ENCODE measurements at regions of chr9 and their contacts with region 1.

Region 1: DNA sequence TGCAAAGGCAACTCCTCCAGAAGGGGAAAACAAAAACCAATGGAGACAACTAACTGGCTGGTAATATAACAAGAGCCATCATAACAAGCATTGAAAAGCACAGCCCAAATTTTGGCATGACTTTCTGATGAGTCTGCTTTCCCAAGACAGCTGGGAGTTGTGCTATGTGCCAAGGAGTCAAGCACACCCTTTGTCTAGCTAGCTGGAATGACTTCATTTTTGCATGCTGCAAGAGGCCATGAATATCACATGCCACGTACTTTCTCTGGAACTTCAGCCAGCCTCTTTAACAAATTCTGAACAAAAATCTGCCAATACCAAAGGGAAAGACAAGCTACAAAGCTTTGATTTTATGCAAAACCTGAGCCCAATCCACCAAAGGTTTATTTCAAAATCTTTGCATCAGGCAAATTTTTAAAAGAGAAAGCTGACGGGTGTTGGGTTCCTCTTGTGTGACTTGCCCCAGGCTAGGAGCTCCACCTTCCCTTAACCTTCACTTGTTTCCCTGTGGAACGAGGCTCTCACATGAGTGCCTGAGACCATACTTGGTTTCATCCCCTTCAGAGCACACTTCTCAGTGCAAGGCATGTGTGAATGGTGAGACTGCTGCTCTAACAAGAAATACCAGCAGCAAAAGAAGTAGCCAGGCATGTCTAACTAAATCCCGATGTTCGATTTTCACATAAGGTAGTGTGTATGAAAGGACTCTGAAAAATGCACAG is 47.3 kb downstream of the S1PR3 start:
- DNase-seq: peak; percentile 97
- ATAC-seq: peak; percentile 91
- H3K4me3 ChIP-seq: no peak overlapping the region
- H3K27ac ChIP-seq: peak overlapping the region; percentile 70; the same call in 1 of the 2 replicates
- H3K4me1 ChIP-seq: peaks cover 14% of the 10 kb centered on the region
- H3K27me3 ChIP-seq: no peaks in the 10 kb centered on the region
- CTCF ChIP-seq: no peak
- POLR2A ChIP-seq: no peak
- RAD21 ChIP-seq: no peak

Region 2: GRCh38 chr9:88965473-88965872 is 73.1 kb before region 1 on chr9:
- CTCF ChIA-PET with region 1: no interaction called
- POLR2A ChIA-PET with region 1: no interaction called
- dilution Hi-C with region 1: no loop called
- in situ Hi-C with region 1: no loop called
- intact Hi-C with region 1: no loop called
- DNase-seq: no peak
- ATAC-seq: no peak
- H3K4me3 ChIP-seq: no peak overlapping the region
- H3K27ac ChIP-seq: no peak overlapping the region
- H3K4me1 ChIP-seq: no peaks in the 10 kb centered on the region
- H3K27me3 ChIP-seq: peaks cover 28% of the 10 kb centered on the region
- CTCF ChIP-seq: no peak
- POLR2A ChIP-seq: no peak
- RAD21 ChIP-seq: no peak

Region 3: DNA sequence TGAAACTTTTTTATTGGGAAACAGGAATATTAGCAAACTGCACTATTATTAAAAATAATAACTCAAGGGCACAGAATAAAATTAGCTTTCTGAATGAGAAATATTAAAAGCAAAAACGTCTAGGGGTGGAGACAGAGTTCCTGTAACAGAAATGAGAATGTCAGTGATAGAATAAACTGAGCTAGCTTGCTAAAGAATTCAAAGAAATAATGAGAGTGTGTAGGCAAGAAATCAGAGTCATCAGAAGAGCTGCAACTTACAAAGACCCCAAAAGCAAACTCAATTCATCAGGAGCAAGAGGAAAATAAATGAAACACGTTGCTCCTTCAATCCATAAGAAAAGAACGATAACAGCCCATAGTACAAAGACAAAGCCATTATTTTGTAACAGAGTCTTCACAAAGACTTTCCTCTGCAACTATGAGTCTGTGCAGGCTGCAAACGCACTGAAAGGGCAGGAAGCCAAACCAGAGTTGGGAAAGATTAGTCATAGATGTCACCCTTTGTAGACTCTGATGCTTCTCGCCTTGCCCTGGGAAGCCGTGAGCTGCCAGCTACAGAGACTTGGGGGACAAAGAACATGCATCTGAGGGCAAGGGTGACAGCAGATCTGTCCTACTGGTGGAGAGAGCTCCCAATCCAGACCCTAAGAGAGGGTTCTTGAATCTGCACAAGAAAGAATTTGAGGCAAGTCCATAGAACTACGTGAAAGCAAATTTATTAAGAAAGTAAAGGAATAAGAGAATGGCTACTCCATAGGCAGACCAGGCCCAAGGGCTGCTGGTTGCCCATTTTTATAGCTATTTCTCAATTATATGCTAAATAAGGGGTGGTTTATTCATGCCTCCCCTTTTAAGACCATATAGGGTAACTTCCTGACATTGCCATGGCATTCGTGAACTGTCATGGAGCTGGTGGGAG is 99.3 kb after region 1 on chr9:
- CTCF ChIA-PET with region 1: no interaction called
- POLR2A ChIA-PET with region 1: no interaction called
- dilution Hi-C with region 1: no loop called
- in situ Hi-C with region 1: no loop called
- intact Hi-C with region 1: loop called (anchors 10 kb)
- DNase-seq: peak; percentile 95
- ATAC-seq: peak; percentile 84
- H3K4me3 ChIP-seq: no peak overlapping the region
- H3K27ac ChIP-seq: peak overlapping the region; percentile 75
- H3K4me1 ChIP-seq: peaks cover 26% of the 10 kb centered on the region
- H3K27me3 ChIP-seq: no peaks in the 10 kb centered on the region
- CTCF ChIP-seq: no peak
- POLR2A ChIP-seq: no peak
- RAD21 ChIP-seq: no peak

Region 4: DNA sequence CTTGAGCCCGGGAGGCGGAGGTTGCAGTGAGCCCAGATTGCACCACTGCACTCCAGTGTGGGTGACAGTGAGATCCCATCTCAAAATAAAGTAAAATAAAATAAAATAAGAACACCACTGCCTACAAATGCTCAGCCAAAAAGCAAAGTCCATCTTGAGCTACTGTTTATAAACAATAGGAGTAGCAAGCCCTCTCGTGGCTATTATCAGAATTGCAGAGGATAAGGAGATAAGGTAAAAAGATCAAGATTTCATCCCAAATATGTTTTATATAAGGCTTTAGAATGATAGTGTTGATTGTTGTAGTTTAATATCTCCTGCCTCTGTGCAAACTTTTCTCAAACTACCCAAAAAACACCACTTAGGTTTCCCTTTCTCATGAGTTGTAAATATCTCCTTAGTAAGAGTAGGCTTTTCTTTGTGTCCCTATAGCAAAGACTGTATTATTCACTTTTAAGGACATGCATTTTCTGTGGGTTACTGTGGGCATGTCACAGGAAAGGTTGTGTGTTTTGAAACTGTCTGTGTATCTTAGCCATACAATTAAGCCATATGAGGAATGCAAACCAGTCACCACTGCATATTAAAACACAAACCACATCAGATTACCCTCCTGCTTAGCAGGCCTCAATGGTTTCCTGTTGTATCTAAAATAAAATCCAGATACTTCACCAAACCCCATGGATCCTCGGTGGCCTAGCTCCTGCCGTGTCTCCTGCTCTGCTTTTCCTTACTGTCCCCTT is 240.6 kb after region 1 on chr9:
- CTCF ChIA-PET with region 1: no interaction called
- POLR2A ChIA-PET with region 1: no interaction called
- dilution Hi-C with region 1: no loop called
- in situ Hi-C with region 1: no loop called
- intact Hi-C with region 1: no loop called
- DNase-seq: peak; percentile 71
- ATAC-seq: peak; percentile 39; the same call in 1 of the 2 replicates
- H3K4me3 ChIP-seq: no peak overlapping the region
- H3K27ac ChIP-seq: no peak overlapping the region
- H3K4me1 ChIP-seq: peaks cover 7% of the 10 kb centered on the region; the same call in 1 of the 2 replicates
- H3K27me3 ChIP-seq: no peaks in the 10 kb centered on the region
- CTCF ChIP-seq: peak; percentile 75
- POLR2A ChIP-seq: no peak
- RAD21 ChIP-seq: peak; percentile 72

Measured in IMR-90 (cell line).